Panc1 (cell line): ENCODE measurements at regions of chr9 and their contacts with region 1.

Region 1: GRCh38 chr9:82284758-82285157 is 296.2 kb downstream of the SPATA31D1 start:
- DNase-seq: no peak
- ATAC-seq: no peak
- H3K4me3 ChIP-seq: no peak overlapping the region
- H3K27ac ChIP-seq: no peak overlapping the region
- H3K4me1 ChIP-seq: no peaks in the 10 kb centered on the region
- H3K27me3 ChIP-seq: no peaks in the 10 kb centered on the region
- CTCF ChIP-seq: no peak

Region 2: GRCh38 chr9:81894891-81895290 is 389.9 kb before region 1 on chr9:
- CTCF ChIA-PET with region 1: no interaction called
- POLR2A ChIA-PET with region 1: interaction called, 10 read pairs
- in situ Hi-C with region 1: no loop called
- intact Hi-C with region 1: no loop called
- DNase-seq: no peak
- ATAC-seq: no peak
- H3K4me3 ChIP-seq: no peak overlapping the region
- H3K27ac ChIP-seq: no peak overlapping the region
- H3K4me1 ChIP-seq: no peaks in the 10 kb centered on the region
- H3K27me3 ChIP-seq: no peaks in the 10 kb centered on the region
- CTCF ChIP-seq: no peak

Region 3: GRCh38 chr9:82488313-82489200 is 203.8 kb after region 1 on chr9:
- CTCF ChIA-PET with region 1: no interaction called
- POLR2A ChIA-PET with region 1: no interaction called
- in situ Hi-C with region 1: no loop called
- intact Hi-C with region 1: no loop called
- DNase-seq: no peak
- ATAC-seq: no peak
- H3K4me3 ChIP-seq: no peak overlapping the region
- H3K27ac ChIP-seq: no peak overlapping the region
- H3K4me1 ChIP-seq: no peaks in the 10 kb centered on the region
- H3K27me3 ChIP-seq: no peaks in the 10 kb centered on the region
- CTCF ChIP-seq: no peak